ENCODE measurements at regions of chr11 and their contacts with region 1.

Region 1: GRCh38 chr11:119067371-119068222 is at the start of gene VPS11:
- DNase-seq: peak; percentile 99
- H3K4me3 Mint-ChIP-seq: peak within 1 kb of the TSS; percentile 91
- H3K27ac Mint-ChIP-seq: peak within 1 kb of the TSS; percentile 96
- H3K4me1 Mint-ChIP-seq: peaks cover 37% of the 10 kb centered on the region
- H3K27me3 Mint-ChIP-seq: no peaks in the 10 kb centered on the region
- total RNA-seq, gene VPS11: 16.9 to 19.5 TPM

Region 2: DNA sequence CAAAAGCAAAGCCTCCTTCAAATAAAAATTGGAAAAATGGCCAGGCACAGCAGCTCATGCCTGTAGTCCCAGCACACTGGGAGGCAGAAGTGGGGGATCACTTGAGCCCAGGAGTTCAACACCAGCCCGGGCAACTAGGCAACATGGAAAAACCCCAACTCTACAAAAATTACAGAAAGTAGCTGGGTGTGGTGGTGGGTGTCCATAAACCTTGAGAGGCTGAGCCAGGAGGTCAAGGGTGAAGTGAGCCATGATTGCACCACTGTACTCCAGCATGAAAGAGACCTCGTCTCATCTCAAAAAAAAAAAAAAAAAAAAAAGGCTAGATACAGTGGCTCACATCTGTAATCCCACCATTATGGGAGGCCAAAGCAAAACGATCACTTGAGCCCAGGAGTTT is 298.9 kb before region 1 on chr11:
- CTCF ChIA-PET with region 1: no interaction called
- intact Hi-C with region 1: no loop called
- DNase-seq: no peak
- H3K4me3 Mint-ChIP-seq: no peak overlapping the region
- H3K27ac Mint-ChIP-seq: peak overlapping the region; percentile 64
- H3K4me1 Mint-ChIP-seq: peaks cover 58% of the 10 kb centered on the region
- H3K27me3 Mint-ChIP-seq: no peaks in the 10 kb centered on the region

Region 3: GRCh38 chr11:119018074-119018938 is 49.3 kb before region 1 on chr11 and contains the starts of genes RPS25 and TRAPPC4:
- CTCF ChIA-PET with region 1: interaction called, 3 read pairs
- intact Hi-C with region 1: loop called (anchors 1 kb)
- DNase-seq: peak; percentile 98
- H3K4me3 Mint-ChIP-seq: peak within 1 kb of the TSS; percentile 98
- H3K27ac Mint-ChIP-seq: peak within 1 kb of the TSS; percentile 99
- H3K4me1 Mint-ChIP-seq: peaks cover 59% of the 10 kb centered on the region
- H3K27me3 Mint-ChIP-seq: no peaks in the 10 kb centered on the region
- total RNA-seq, gene RPS25: 2,183 to 2,206 TPM
- total RNA-seq, gene TRAPPC4: 66.4 to 69.9 TPM

Region 4: GRCh38 chr11:119084663-119085436 is 17.3 kb after region 1 on chr11 and contains the start of gene HMBS:
- CTCF ChIA-PET with region 1: interaction called, 5 read pairs
- intact Hi-C with region 1: loop called (anchors 1 kb)
- DNase-seq: peak; percentile 94
- H3K4me3 Mint-ChIP-seq: peak within 1 kb of the TSS; percentile 98
- H3K27ac Mint-ChIP-seq: peak within 1 kb of the TSS; percentile 96
- H3K4me1 Mint-ChIP-seq: peaks cover 21% of the 10 kb centered on the region
- H3K27me3 Mint-ChIP-seq: no peaks in the 10 kb centered on the region
- total RNA-seq, gene HMBS: 27.9 to 29.4 TPM

Region 5: DNA sequence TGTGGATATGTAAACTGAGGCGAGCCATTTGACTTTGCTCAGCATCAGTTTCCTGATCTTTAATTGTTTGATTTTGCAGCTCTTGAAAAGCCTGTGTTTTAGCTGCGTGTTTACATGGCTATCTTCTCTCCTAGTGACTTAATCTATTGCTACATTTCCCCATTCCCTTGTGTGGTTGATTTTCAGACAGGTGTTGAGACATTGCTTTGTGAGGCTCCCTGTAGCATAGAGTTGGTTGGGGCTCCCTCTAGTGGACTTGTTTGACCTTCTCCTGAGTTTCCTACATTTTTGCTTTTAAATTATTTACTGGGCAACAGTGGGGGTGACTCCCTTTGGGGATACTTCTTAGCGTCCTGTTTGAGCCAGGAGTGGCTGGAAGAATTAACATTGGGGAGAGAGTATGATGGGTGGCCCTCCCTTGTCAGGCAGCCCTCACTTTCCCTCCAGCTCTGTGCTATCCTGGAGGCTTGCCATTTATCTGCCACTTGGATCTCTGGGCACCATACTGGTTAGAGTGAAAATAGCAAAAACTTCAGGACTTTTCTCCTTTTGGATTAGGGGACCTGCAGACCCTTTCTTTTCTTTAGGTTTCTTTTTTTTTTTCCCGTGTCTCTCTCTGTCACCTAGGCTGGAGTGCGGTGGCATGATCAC is 129.4 kb after region 1 on chr11:
- CTCF ChIA-PET with region 1: interaction called, 7 read pairs
- intact Hi-C with region 1: loop called (anchors 1 kb)
- DNase-seq: peak; percentile 88
- H3K4me3 Mint-ChIP-seq: no peak overlapping the region
- H3K27ac Mint-ChIP-seq: no peak overlapping the region
- H3K4me1 Mint-ChIP-seq: no peaks in the 10 kb centered on the region
- H3K27me3 Mint-ChIP-seq: no peaks in the 10 kb centered on the region

Region 6: GRCh38 chr11:119258180-119258579 is 190.6 kb after region 1 on chr11:
- CTCF ChIA-PET with region 1: no interaction called
- intact Hi-C with region 1: no loop called
- DNase-seq: peak; percentile 49
- H3K4me3 Mint-ChIP-seq: peak overlapping the region; percentile 27
- H3K27ac Mint-ChIP-seq: peak overlapping the region; percentile 38
- H3K4me1 Mint-ChIP-seq: peaks cover 53% of the 10 kb centered on the region
- H3K27me3 Mint-ChIP-seq: no peaks in the 10 kb centered on the region

Region 7: GRCh38 chr11:120034881-120035630 is 967.5 kb after region 1 on chr11:
- CTCF ChIA-PET with region 1: no interaction called
- intact Hi-C with region 1: no loop called
- DNase-seq: no peak
- H3K4me3 Mint-ChIP-seq: no peak overlapping the region
- H3K27ac Mint-ChIP-seq: no peak overlapping the region
- H3K4me1 Mint-ChIP-seq: no peaks in the 10 kb centered on the region
- H3K27me3 Mint-ChIP-seq: peaks cover 5% of the 10 kb centered on the region

Measured in activated naive CD4-positive, alpha-beta T cell treated with anti-CD3 and anti-CD28 coated beads for 36 hours (primary cell).